ENCODE measurements at regions of chr17 and their contacts with region 1.

Region 1: DNA sequence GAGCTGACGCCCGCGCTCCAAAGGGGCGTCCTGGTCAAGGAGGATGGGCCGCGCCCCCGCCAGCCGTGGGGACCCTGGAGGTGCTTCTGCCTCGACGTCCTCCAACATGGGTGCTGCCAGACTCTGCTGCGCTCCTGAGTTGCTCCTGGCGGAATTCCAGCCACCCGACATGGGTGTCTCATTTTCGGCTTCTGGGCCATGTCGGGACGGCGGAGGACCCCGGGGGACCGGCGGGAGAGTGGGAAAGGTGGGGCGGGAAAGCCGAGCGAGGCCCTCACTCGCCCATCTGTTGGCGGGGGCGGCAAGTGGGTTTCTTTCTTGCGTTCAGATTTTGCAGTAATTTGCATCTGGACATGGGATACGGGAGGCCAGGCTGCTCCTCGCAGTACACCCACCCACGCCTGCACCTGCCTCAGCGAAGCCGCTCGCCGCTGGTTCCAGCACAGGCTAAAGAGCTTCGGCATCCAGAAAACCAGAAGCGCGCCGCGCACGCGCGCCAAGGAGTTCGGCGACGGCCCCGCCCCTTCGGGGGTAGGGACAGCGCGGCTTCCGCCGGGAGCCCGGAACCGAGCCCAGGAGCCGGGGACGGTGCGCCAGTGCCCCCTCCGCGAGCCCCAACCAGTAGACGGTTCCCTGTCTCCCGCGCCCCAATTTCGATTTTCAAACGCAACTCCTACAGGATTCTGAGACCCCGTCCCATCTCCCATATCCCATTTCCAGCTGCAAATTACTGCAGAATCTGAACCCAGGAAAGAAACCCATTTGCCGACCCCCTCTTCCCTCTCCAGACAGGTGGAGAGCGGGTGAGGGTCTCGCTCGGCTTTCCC is at the start of gene ARMC7:
- DNase-seq: peak; percentile 88
- ATAC-seq: peak; percentile 88 to 90
- total RNA-seq, gene ARMC7: 5.8 to 6.7 TPM

Region 2: DNA sequence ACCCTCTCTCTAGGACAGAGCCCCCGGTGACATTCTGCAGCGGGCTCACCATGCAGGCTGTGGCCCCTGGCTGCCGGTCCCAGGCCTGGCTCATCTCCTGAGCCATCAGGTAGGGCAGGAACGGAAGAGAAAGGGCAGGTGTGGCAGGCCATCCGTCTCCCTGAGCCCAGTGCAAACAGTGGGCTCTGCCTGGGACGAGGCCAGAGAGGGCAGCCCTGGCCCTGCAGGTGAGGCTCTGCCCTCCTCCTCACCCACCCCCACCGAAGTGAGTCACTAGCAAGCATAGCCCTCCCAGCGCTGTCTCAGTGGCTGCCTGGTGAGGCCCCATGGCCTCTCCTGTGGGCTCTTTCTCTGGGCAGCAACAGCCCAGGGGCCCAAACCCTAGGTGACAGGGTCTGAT is 159.4 kb before region 1 on chr17:
- intact Hi-C with region 1: no loop called
- DNase-seq: no peak
- ATAC-seq: no peak

Region 3: DNA sequence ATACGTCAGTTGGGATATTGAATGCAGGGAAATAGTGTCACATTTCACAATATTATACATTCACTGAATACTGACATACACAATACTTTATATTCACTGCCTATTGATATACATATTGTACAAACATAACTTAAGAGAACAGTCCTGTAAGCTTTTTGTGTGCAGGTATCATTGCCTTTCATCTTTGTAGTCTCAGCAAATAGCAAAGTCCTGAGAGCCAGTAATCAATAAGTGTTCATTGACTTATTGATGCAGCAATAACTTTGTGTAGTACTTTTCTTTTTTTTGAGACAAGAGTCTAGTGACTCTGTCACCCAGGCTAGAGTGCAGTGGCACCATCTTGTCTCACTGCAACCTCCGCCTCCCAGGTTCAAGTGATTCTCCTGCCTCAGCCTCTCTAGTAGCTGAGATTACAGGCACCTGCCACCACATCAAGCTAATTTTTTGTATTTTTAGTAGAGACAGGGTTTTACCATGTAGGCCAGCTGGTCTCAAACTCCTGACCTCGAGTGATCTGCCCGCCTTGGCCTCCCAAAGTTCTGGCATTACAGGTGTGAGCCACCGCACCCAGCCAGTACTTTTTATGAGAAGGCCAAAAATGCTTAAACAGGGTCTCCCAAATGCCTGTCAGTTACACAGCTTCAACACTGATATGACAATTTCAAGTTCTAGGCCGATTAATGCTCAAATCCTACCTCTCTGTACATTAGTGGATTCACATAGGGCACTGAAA is 90.4 kb after region 1 on chr17:
- intact Hi-C with region 1: loop called in 1 of 2 experiments (anchors 2 kb)
- DNase-seq: no peak
- ATAC-seq: no peak